SK-N-SH (cell line): ENCODE measurements at regions of chr5 and their contacts with region 1.

Region 1: DNA sequence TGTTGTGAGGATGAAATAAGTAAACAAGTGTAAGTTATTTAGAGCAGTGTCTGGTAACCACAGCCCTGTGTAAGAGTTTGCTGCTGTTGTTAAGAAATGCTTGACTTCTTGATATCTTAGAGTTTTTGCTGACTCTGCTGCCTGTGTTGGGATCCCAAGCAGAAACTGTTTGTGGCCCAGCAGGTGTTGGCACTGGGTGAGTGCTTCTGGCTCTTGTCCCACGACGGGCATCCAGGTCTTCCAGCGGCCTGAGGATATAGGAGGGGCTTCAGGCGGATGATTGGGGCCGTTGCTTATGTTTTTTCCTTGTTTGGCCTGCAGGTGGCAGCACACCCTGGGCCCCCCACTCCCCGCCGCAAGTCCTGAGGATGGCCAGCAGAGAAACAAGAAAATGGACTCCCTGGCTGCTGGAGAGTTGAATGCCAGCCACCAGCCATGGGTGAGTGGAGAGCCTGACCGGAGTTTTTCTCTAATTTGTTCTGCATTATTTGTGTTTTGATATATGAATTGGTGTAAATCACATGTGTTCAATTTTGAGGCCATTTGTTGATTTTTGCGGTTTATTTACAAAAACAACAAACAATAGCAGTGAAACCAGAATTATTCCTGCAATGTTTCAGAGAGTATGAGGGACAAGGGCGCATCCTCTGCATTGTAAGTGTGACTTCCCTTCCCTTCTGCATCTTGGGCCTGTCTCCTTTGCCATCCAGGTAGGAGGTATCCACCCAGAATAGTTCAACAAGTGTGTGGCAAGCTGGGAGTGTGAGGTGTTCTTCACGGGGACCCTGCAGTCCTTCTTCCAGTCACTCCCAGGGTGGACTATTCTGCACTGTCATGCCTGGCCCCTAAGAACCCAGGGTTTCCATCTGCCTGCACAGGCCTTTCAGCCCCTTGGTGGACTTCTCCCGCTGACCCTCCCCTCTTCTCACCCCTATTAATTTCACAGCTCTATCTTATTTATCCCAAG is 50.3 kb downstream of the SLC22A5 start:
- DNase-seq: peak; percentile 91
- H3K4me3 ChIP-seq: peak overlapping the region in 1 of 2 experiments; percentile 2; a peak in 1 of 4 replicates
- H3K27ac ChIP-seq: peak overlapping the region in 1 of 2 experiments; percentile 29; a peak in 1 of 4 replicates
- H3K4me1 ChIP-seq: peaks cover 7 to 23% of the 10 kb centered on the region in 2 experiments; a peak in 2 of 4 replicates
- H3K27me3 ChIP-seq: no peaks in the 10 kb centered on the region
- CTCF ChIP-seq: peak; percentile 87
- EP300 ChIP-seq: no peak
- RAD21 ChIP-seq: peak; percentile 80

Region 2: DNA sequence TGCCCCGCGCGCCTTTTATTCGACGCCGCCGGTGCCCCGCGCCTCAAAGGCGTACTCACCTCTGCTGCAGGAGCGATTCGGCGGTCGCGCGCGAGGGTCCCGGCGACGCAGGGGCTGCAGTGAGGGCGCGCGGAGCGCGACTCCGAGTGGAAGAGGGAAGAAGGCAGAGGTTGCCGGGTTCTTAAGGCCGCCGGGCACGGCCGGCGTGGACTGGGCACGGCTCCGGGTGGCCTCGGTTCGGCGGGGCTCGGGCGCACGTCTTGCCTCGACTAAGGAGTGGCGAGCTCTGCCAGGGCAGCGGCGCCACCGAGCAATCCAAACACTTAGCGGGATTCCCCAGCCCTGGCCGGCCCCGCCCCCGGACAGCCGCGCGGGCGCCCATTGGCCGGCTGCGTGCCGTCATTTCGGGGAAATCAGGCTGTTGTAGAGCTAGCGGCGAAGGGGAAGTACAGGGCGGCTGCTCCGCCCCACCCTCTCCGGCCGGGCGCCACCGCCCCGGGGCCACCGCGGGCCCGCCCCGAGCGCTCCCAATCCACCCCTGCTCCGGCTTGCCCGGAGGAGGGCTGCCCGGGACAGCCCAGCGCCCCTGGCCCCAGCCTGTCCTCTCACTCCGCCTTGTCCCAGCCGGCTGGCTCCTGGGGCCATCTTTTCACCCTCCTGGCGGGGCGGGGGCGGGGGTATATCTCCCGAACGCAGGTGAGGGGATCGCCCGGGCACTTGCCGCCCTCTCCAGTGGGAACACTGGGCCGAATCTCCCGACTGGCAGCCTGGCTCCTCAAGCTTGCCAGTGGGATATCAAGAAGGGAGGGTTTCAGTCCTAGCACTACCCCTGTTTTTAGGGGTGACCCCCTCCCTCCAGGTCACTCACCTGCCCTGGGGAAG is 70.9 kb after region 1 on chr5 and contains the start of gene IRF1:
- CTCF ChIA-PET with region 1: interaction called, 95 read pairs
- POLR2A ChIA-PET with region 1: interaction called, 8 read pairs
- DNase-seq: peak; percentile 99
- H3K4me3 ChIP-seq: peak within 1 kb of the TSS; percentile 86 to 89
- H3K27ac ChIP-seq: peak within 1 kb of the TSS; percentile 89 to 90
- H3K4me1 ChIP-seq: peaks cover 12 to 26% of the 10 kb centered on the region in 2 experiments
- H3K27me3 ChIP-seq: no peaks in the 10 kb centered on the region
- CTCF ChIP-seq: no peak; the same call in 1 of the 2 replicates
- EP300 ChIP-seq: no peak
- RAD21 ChIP-seq: no peak
- polyA plus RNA-seq, gene IRF1: 13.8 and 15.2 TPM in 2 replicates

Region 3: DNA sequence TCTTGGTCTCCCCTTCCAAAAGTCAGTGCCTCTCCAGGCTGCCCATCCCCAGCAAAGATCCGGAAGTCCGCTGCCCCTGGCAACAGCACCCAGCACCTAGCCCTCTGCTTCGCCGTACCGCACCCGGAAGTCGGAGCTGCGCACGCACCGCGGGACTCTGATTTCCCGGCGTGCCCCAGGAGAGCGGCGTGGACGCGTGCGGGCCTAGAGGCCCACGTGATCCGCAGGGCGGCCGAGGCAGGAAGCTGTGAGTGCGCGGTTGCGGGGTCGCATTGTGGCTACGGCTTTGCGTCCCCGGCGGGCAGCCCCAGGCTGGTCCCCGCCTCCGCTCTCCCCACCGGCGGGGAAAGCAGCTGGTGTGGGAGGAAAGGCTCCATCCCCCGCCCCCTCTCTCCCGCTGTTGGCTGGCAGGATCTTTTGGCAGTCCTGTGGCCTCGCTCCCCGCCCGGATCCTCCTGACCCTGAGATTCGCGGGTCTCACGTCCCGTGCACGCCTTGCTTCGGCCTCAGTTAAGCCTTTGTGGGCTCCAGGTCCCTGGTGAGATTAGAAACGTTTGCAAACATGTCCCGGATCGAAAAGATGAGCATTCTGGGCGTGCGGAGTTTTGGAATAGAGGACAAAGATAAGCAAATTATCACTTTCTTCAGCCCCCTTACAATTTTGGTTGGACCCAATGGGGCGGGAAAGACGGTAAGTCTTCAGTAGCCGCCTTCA is 137.1 kb after region 1 on chr5 and contains the start of gene RAD50:
- CTCF ChIA-PET with region 1: no interaction called
- POLR2A ChIA-PET with region 1: no interaction called
- DNase-seq: peak; percentile 94
- H3K4me3 ChIP-seq: peak within 1 kb of the TSS; percentile 73 to 81
- H3K27ac ChIP-seq: peak within 1 kb of the TSS; percentile 92 to 98
- H3K4me1 ChIP-seq: peaks cover 0 to 4% of the 10 kb centered on the region in 2 experiments; a peak in 1 of 4 replicates
- H3K27me3 ChIP-seq: no peaks in the 10 kb centered on the region
- CTCF ChIP-seq: no peak
- EP300 ChIP-seq: peak in 1 of 2 experiments; percentile 21; a peak in 2 of 4 replicates
- RAD21 ChIP-seq: no peak
- polyA plus RNA-seq, gene RAD50: 20.0 and 25.7 TPM in 2 replicates